PC-9 (cell line): ENCODE measurements at regions of chr11 and their contacts with region 1.

Region 1: DNA sequence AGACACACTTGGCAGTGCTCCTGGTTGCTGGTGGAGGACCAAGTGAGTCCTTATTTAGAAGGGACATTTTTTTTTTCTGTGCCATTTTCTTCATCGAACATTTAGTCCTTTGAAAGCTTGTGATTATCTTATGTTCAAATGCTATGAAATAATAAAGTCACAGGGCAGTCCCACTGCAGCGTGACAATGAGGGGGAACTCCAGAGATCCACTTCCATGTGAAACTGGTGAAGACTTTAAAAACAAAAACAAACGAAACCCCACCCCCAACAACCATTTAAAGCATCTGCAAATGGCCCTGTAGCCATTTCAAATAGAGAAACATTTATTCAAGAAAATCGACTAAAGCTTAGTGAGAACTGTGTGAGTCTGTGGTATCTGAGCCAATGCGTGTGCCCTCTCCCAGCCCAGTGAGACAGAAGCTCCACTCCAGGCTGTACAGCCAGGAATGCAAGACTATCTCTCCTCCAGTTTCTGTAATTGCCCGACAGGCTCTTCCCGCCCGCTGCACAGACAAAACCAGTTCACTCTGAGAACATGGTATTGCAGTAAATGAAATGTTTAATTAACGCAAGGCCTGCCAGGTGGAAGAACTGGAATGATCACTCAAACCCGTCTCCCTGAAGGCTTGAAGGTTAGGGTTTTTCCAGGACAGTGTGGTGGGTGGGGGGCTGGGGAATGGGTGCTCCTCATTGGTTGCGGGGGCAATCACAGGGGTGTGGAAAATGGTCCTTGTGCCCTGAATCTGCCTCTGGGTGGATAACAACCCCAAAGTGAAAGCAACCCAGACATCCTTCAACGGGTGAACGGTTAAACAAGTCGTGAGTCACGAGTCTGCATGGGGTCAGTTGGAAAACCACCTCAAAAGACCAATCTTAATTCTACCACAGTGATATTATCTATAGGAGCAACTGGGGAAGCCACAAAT is 8.4 kb downstream of the KRTAP5-6 start:
- DNase-seq: peak; percentile 53 to 87
- H3K4me3 ChIP-seq: peak overlapping the region; percentile 51; the same call in 1 of the 2 replicates
- H3K27ac ChIP-seq: peak overlapping the region; percentile 76
- H3K4me1 ChIP-seq: peaks cover 27% of the 10 kb centered on the region
- H3K27me3 ChIP-seq: no peaks in the 10 kb centered on the region
- CTCF ChIP-seq: no peak

Region 2: DNA sequence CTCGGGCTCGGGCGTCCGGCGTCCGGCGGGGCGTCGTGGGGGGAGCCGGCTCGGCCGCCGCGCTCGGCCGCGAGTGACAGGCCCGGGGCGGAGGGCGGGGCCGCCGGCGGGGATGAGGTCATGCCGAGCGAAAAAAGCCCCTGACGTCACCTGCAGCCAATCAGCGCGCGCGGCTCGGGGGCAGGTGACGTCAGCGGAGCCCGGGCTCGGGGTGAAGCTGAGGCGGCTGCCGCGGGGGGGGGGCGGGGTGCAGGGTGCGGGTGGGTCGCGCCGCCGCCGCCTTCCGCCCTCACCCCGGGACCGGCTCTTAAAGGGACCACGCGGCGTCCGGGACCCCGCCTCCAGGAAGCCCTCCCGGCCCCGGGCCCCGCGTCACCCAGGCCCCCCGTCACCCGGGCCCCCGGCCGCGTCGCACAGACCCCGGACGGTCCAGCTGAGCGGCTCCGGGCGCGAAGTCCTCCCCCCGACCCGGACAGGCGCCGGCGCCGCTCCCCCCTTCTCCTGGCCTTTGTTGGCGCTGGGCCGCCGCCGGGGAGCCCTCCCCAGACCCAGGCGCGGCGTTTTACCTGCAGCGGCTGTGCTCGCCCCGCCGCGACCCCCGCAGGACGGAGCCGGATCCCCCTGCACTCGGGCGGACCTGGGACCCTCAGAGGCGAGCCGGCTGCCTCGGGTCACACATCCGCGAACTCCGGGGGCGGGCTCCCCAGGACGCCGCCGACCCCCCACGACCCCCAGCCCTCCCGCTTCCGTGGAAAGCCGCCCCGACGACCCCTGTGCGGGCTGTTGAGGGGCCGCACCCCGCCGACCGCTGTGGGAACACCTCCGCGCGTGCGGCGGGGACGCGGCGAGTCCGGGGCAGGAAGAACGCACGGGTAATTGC is 133.0 kb before region 1 on chr11 and contains the start of gene DUSP8:
- CTCF ChIA-PET with region 1: no interaction called
- POLR2A ChIA-PET with region 1: no interaction called
- intact Hi-C with region 1: no loop called
- DNase-seq: peak; percentile 35 to 76
- H3K4me3 ChIP-seq: peak within 1 kb of the TSS; percentile 48; the same call in 1 of the 2 replicates
- H3K27ac ChIP-seq: no peak within 1 kb of the TSS
- H3K4me1 ChIP-seq: no peaks in the 10 kb centered on the region; the same call in 1 of the 2 replicates
- H3K27me3 ChIP-seq: peaks cover 8% of the 10 kb centered on the region
- CTCF ChIP-seq: no peak
- total RNA-seq, gene DUSP8: 2.6 and 4.2 TPM in 2 replicates

Region 3: DNA sequence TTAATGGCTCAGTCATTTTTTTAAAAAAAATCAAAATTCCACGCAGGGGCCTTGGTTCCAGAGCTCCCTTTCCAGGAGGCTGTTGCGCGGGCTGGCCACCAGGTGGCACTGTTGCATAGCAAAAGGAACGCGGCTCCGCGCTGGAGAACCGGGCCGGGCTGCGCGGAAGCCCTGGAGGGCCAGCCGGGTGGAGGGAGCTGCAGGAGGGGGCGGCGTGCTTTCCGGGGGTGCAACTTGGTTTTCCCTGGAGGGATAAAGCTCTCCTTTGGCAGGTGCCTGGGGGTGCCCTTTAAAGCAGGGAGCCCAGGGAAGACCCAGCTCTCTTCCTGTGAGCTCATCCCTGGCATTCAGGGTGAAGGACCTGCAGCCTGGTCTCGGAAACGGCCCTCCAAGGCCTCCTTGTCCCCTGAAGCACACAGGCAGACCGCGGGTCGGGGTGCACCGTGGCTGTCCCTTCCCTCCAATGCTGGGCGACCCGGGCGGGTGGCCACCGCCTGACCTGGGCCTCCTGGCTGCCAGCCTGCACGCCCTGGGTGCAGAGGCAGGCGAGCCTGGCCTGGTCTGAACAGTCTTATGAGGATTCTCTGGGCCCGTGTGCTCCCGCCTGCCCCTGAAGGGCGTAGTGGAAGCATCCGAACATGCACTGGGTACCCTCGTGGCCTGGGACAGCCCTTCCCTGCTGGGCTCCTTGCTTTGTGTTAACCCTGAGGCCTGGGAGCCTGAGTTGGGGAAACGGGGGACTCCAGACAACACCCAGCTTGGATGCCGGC is 52.4 kb before region 1 on chr11:
- CTCF ChIA-PET with region 1: interaction called, 17 read pairs
- POLR2A ChIA-PET with region 1: no interaction called
- intact Hi-C with region 1: no loop called
- DNase-seq: peak in 1 of 2 experiments; percentile 61
- H3K4me3 ChIP-seq: no peak overlapping the region
- H3K27ac ChIP-seq: no peak overlapping the region
- H3K4me1 ChIP-seq: no peaks in the 10 kb centered on the region
- H3K27me3 ChIP-seq: peaks cover 39% of the 10 kb centered on the region
- CTCF ChIP-seq: peak; percentile 92

Region 4: DNA sequence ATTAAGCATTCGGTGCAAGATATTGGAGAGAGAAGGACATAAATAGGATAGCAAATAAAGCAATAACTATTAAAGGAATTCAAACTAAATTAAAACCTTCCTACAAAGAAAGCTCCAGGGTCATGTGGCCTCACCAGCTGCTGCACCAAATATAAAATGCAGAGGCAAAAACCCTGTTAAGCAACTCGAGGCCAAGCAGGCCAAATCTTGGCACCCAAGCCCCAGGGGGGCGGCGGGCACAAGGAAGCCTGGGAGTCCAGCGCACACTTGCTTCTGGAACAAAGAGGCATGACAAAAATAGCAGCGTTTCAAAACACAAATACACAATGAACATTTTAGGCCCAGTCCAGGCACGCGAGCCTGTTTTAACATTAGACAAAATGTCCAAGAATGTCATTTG is 12.4 kb after region 1 on chr11:
- CTCF ChIA-PET with region 1: no interaction called
- POLR2A ChIA-PET with region 1: interaction called, 25 read pairs
- intact Hi-C with region 1: no loop called
- DNase-seq: no peak
- H3K4me3 ChIP-seq: no peak overlapping the region
- H3K27ac ChIP-seq: no peak overlapping the region
- H3K4me1 ChIP-seq: no peaks in the 10 kb centered on the region
- H3K27me3 ChIP-seq: no peaks in the 10 kb centered on the region
- CTCF ChIP-seq: no peak